Psoas muscle (tissue), 8 donors: ENCODE measurements at regions of chr15 and their contacts with region 1.

Region 1: GRCh38 chr15:68672781-68673205 is 94.0 kb downstream of the CORO2B start:
- DNase-seq: no peak
- ATAC-seq: no peak
- H3K4me3 ChIP-seq: no peak overlapping the region
- H3K27ac ChIP-seq: no peak overlapping the region
- H3K4me1 ChIP-seq: no peaks in the 10 kb centered on the region
- H3K27me3 ChIP-seq: no peaks in the 10 kb centered on the region
- CTCF ChIP-seq: no peak

Region 2: GRCh38 chr15:68304589-68305337 is 368.0 kb before region 1 on chr15:
- intact Hi-C with region 1: loop called in 1 of 2 experiments (anchors 10 kb)
- DNase-seq: no peak
- ATAC-seq: no peak
- H3K4me3 ChIP-seq: no peak overlapping the region
- H3K27ac ChIP-seq: no peak overlapping the region
- H3K4me1 ChIP-seq: peaks cover 9% of the 10 kb centered on the region
- H3K27me3 ChIP-seq: no peaks in the 10 kb centered on the region
- CTCF ChIP-seq: no peak

Region 3: DNA sequence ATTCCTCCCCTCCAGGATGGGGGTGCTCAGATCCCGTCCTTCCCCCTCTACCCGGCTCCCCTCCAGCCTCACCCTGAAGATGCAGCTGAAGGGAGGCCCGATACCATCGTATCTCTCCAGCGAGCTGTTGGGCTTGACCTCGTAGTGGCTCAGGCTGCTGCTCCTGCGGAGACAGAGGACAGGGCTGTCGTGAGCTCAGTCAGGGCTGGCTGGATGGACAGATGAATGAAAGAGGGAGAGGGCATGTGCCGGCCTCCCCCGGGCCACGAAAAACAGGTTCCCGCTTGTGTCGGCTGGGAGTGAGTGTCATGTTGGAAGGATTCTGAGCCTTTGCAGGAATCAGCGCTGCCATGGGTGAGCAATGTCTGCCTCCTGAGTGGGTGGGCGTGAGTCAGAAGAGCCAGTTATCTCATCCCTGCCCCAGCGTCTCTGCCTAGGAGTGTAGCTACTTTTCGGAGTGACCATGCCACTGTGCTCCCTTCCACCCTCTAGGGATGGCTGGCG is 360.0 kb before region 1 on chr15:
- intact Hi-C with region 1: loop called (anchors 5 to 10 kb)
- DNase-seq: no peak
- ATAC-seq: no peak
- H3K4me3 ChIP-seq: no peak overlapping the region
- H3K27ac ChIP-seq: no peak overlapping the region
- H3K4me1 ChIP-seq: peaks cover 12% of the 10 kb centered on the region
- H3K27me3 ChIP-seq: peaks cover 0 to 2% (median 0%) of the 10 kb centered on the region in 3 donors
- CTCF ChIP-seq: no peak

Region 4: GRCh38 chr15:68550481-68551295 is 122.1 kb before region 1 on chr15:
- intact Hi-C with region 1: loop called (anchors 2 to 5 kb)
- DNase-seq: peak; percentile 63 to 80
- ATAC-seq: peak in 3 of 4 donors; percentile 46 to 76 (median 58)
- H3K4me3 ChIP-seq: no peak overlapping the region
- H3K27ac ChIP-seq: no peak overlapping the region
- H3K4me1 ChIP-seq: no peaks in the 10 kb centered on the region
- H3K27me3 ChIP-seq: peaks cover 0 to 5% (median 0%) of the 10 kb centered on the region in 3 donors
- CTCF ChIP-seq: peak; percentile 95

Region 5: GRCh38 chr15:68559345-68560310 is 113.2 kb before region 1 on chr15:
- intact Hi-C with region 1: loop called (anchors 2 to 5 kb)
- DNase-seq: peak; percentile 79 to 90
- ATAC-seq: peak; percentile 92 to 98 (median 94)
- H3K4me3 ChIP-seq: peak overlapping the region; percentile 58
- H3K27ac ChIP-seq: no peak overlapping the region
- H3K4me1 ChIP-seq: no peaks in the 10 kb centered on the region
- H3K27me3 ChIP-seq: no peaks in the 10 kb centered on the region
- CTCF ChIP-seq: peak; percentile 95

Region 6: GRCh38 chr15:68578174-68578979 is 94.4 kb before region 1 on chr15:
- intact Hi-C with region 1: loop called in 1 of 2 experiments (anchors 5 kb)
- DNase-seq: peak; percentile 83 to 89
- ATAC-seq: peak; percentile 65 to 83 (median 78)
- H3K4me3 ChIP-seq: peak overlapping the region; percentile 71
- H3K27ac ChIP-seq: peak overlapping the region; percentile 16
- H3K4me1 ChIP-seq: peaks cover 11% of the 10 kb centered on the region
- H3K27me3 ChIP-seq: peaks cover 0 to 55% (median 5%) of the 10 kb centered on the region in 3 donors
- CTCF ChIP-seq: peak; percentile 42

Region 7: DNA sequence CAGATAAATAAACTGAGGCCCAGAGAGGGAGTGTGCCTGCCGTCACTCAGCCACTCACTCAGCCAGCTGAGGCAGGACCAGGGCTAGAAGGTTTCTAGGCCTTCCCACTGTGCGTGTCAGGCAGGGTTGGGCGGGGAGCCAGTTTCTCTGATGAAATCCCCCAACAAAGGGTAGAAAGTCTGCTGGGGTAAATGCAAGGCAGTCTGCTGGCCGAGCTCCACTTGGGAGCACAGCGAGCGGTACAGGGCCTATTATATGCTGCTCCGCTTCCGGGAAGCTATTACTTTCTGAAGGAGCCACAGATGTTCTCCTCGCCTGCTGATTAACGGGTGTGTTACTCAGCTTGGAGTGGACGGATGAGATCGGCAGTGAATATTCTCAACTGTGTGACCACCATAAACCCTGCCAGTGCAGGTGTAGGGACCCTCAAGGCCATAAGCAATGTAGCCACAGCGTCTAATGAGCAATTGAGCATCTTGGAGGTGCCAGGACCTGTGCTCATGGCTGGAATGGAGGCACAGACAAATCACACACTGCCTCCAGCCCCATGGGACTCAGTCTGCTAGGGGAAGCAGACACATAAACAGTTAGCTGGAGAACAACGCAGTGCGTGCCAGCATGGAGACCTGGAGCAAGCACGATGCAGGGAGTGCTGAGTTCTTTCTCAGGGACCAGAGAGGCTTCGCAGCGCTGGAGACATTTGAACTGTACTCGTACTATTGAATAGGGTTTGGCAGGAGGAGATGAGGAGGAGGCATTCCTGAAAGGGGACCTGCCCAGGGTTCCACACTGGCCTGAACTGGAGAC is 51.9 kb before region 1 on chr15:
- intact Hi-C with region 1: no loop called
- DNase-seq: peak; percentile 92 to 95
- ATAC-seq: peak; percentile 57 to 83 (median 82)
- H3K4me3 ChIP-seq: no peak overlapping the region
- H3K27ac ChIP-seq: peak overlapping the region; percentile 14
- H3K4me1 ChIP-seq: peaks cover 7% of the 10 kb centered on the region
- H3K27me3 ChIP-seq: no peaks in the 10 kb centered on the region
- CTCF ChIP-seq: no peak

Region 8: DNA sequence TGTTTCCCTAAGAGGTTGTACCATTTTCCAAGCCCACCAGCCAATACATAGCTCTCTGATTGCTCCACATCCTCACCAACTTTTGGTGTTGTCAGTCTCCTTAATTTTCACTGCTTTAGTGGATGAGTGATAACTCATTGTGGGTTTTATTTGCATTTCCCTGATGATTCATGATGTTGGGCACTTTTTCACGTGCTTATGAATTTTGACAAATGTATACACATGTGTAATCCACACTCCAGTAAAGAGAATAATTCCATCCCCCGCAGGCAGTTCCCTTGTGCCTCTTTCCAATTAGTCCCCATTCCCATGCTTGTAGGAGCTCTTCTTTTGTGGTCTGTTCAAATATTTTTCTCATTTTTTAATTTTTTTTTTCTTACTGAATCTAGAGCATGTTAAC is 95.5 kb after region 1 on chr15:
- intact Hi-C with region 1: no loop called
- DNase-seq: no peak
- ATAC-seq: no peak
- H3K4me3 ChIP-seq: no peak overlapping the region
- H3K27ac ChIP-seq: no peak overlapping the region
- H3K4me1 ChIP-seq: peaks cover 6% of the 10 kb centered on the region
- H3K27me3 ChIP-seq: no peaks in the 10 kb centered on the region
- CTCF ChIP-seq: no peak